ENCODE measurements at regions of chr13 and their contacts with region 1.

Region 1: DNA sequence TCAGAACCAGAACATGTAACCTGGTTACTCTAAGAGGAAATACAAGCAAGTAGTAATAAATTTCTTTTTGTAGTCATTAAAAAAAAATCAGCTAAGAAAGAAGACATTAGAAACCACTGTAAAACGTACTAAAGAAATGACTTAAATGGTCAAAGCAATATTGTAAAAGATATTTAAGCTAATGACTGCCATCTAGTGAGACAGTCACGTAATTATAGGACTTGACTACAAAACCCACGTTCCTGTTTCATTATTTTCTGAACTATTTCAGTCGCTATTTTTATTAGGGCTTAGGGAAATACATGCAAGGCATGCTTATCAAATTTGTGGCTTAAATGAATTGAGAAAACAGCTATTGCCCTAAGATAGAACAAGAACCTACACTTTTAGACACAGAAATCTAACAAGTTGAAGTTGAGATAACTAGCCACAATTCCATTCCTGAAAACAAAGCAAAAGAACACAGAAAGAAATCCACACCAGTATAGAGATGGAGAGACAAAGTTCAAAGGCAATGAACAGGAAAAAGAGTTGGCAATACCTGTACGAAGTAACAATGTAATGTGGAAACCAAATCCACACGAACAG is 17.9 kb downstream of the ALG5 start:
- DNase-seq: peak; percentile 36

Region 2: GRCh38 chr13:36746051-36746450 is 235.2 kb before region 1 on chr13:
- CTCF ChIA-PET with region 1: no interaction called
- POLR2A ChIA-PET with region 1: no interaction called
- DNase-seq: no peak

Region 3: DNA sequence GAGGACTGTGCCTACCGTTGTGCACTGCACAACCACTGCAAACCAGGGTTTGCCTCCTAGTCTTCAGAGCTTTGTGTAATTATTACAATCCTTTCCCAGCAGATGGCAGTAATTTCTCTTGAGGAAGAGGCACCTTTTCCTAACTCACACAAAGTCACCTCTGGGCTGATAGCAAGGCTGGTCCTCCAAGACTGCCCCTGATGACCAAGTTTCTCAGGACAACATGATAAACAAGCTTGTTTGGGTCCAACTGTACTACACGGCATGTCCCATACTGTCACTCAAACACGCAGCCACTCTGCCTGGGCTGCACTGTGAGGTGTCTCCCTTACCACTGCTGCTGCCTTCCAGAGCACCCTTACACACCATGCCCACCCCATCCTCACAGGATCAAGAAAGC is 123.0 kb before region 1 on chr13:
- CTCF ChIA-PET with region 1: interaction called, 15 read pairs
- POLR2A ChIA-PET with region 1: interaction called, 3 read pairs
- DNase-seq: peak; percentile 59

Measured in HEK293T (cell line).